Transverse colon (tissue), 4 donors: ENCODE measurements at regions of chr4 and their contacts with region 1.

Region 1: GRCh38 chr4:164779811-164780216 is 25.9 kb downstream of the SMIM31 start:
- DNase-seq: no peak
- H3K4me3 ChIP-seq: no peak overlapping the region
- H3K27ac ChIP-seq: no peak overlapping the region
- H3K4me1 ChIP-seq: peaks cover 0 to 6% (median 3%) of the 10 kb centered on the region in 4 donors
- H3K27me3 ChIP-seq: no peaks in the 10 kb centered on the region
- CTCF ChIP-seq: peak; percentile 55 to 71 (median 66)
- EP300 ChIP-seq: no peak
- POLR2A ChIP-seq: no peak

Region 2: GRCh38 chr4:165096776-165097175 is 317.0 kb after region 1 on chr4:
- in situ Hi-C with region 1: loop called in 2 of 4 experiments (anchors 25 kb)
- intact Hi-C with region 1: no loop called
- DNase-seq: no peak
- H3K4me3 ChIP-seq: no peak overlapping the region
- H3K27ac ChIP-seq: no peak overlapping the region
- H3K4me1 ChIP-seq: no peaks in the 10 kb centered on the region
- H3K27me3 ChIP-seq: no peaks in the 10 kb centered on the region
- CTCF ChIP-seq: peak; percentile 36 to 50 (median 44)
- EP300 ChIP-seq: no peak
- POLR2A ChIP-seq: no peak